ENCODE measurements at regions of chr3 and their contacts with region 1.

Region 1: GRCh38 chr3:152258448-152259393 is 10.0 kb upstream of the MBNL1 start:
- DNase-seq: peak; percentile 77 to 84
- ATAC-seq: peak; percentile 90
- H3K4me3 ChIP-seq: peak overlapping the region in 1 of 2 donors; percentile 24
- H3K27ac ChIP-seq: peak overlapping the region; percentile 42 to 72
- H3K4me1 ChIP-seq: peaks cover 1 to 3% of the 10 kb centered on the region in 2 donors
- H3K27me3 ChIP-seq: no peaks in the 10 kb centered on the region

Region 2: GRCh38 chr3:152148579-152148978 is 110.1 kb before region 1 on chr3:
- intact Hi-C with region 1: no loop called
- DNase-seq: no peak
- ATAC-seq: peak; percentile 21
- H3K4me3 ChIP-seq: no peak overlapping the region
- H3K27ac ChIP-seq: peak overlapping the region in 1 of 2 donors; percentile 17
- H3K4me1 ChIP-seq: peaks cover 0 to 7% of the 10 kb centered on the region in 2 donors
- H3K27me3 ChIP-seq: no peaks in the 10 kb centered on the region

Region 3: GRCh38 chr3:152222327-152222726 is 36.4 kb before region 1 on chr3:
- intact Hi-C with region 1: loop called in 1 of 2 experiments (anchors 5 kb)
- DNase-seq: no peak
- ATAC-seq: peak; percentile 72
- H3K4me3 ChIP-seq: peak overlapping the region in 1 of 2 donors; percentile 41
- H3K27ac ChIP-seq: peak overlapping the region; percentile 33 to 43
- H3K4me1 ChIP-seq: peaks cover 0 to 4% of the 10 kb centered on the region in 2 donors
- H3K27me3 ChIP-seq: no peaks in the 10 kb centered on the region

Region 4: GRCh38 chr3:152298393-152299242 is 39.9 kb after region 1 on chr3:
- intact Hi-C with region 1: no loop called
- DNase-seq: no peak
- ATAC-seq: peak; percentile 83
- H3K4me3 ChIP-seq: peak overlapping the region; percentile 58 to 76
- H3K27ac ChIP-seq: peak overlapping the region; percentile 36 to 81
- H3K4me1 ChIP-seq: peaks cover 5 to 23% of the 10 kb centered on the region in 2 donors
- H3K27me3 ChIP-seq: no peaks in the 10 kb centered on the region

Measured in aorta (tissue), 5 donors.